ENCODE measurements at regions of chrX and their contacts with region 1.

Region 1: GRCh38 chrX:11334165-11334564 is 41.0 kb downstream of the AMELX start:
- DNase-seq: no peak
- ATAC-seq: no peak
- H3K4me3 ChIP-seq: no peak overlapping the region
- H3K27ac ChIP-seq: no peak overlapping the region
- H3K4me1 ChIP-seq: no peaks in the 10 kb centered on the region
- H3K27me3 ChIP-seq: no peaks in the 10 kb centered on the region
- CTCF ChIP-seq: no peak

Region 2: GRCh38 chrX:11059933-11060332 is 274.2 kb before region 1 on chrX:
- intact Hi-C with region 1: no loop called
- DNase-seq: no peak
- ATAC-seq: no peak
- H3K4me3 ChIP-seq: no peak overlapping the region
- H3K27ac ChIP-seq: no peak overlapping the region
- H3K4me1 ChIP-seq: no peaks in the 10 kb centered on the region
- H3K27me3 ChIP-seq: no peaks in the 10 kb centered on the region
- CTCF ChIP-seq: no peak

Region 3: GRCh38 chrX:11319806-11320520 is 14.2 kb before region 1 on chrX:
- intact Hi-C with region 1: loop called in 1 of 10 experiments (anchors 1 kb)
- DNase-seq: no peak
- ATAC-seq: no peak
- H3K4me3 ChIP-seq: no peak overlapping the region
- H3K27ac ChIP-seq: no peak overlapping the region
- H3K4me1 ChIP-seq: no peaks in the 10 kb centered on the region
- H3K27me3 ChIP-seq: no peaks in the 10 kb centered on the region
- CTCF ChIP-seq: no peak

Measured in heart right ventricle (tissue), 16 donors.